WTC11 (cell line): ENCODE measurements at regions of chr20 and their contacts with region 1.

Region 1: DNA sequence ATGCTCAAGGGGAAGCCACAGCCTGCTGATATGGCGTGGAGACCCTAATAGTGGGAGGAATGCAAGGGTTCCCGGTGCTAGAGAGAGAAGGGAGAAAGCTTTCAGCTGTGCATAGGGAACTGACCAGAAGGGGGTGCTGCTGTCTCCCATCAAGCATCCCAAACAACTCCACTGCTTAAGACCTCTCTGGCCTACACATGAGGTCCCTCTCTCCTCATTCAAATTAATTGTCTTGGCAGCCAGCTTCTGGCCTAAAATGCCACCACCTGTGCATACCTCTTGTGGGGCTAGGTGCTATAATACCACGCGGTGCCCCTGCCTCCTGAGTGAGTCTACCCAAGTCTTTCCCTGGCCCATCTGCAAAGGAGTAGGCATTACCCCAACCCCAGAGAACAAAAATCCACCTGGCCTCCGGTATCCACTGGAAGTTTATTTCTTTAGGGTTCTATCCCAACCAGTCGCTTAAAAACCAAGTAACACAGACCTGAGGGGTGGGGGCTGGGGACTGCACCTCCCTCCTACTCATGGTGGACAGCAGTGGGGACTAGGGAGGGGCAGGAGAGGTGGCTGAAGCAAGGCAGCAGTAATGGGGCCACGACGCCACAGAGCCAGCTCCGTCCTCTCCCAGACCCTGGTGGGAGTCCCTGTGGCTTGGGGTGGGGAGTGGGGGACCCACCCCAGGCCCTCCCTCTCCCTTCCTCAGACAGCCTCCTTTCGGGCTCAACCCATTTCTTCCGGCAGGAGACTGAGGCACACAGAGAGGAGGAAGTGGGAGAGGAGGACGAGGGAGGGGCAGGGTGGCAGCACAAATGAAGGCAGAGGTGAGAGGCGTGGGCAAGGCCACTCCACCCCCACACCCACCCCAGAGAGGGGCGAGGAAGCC is 14.2 kb downstream of the ADISSP start:
- DNase-seq: peak; percentile 78
- ATAC-seq: peak; percentile 59
- H3K4me3 Mint-ChIP-seq: no peak overlapping the region
- H3K27ac Mint-ChIP-seq: no peak overlapping the region
- H3K4me1 Mint-ChIP-seq: peaks cover 6% of the 10 kb centered on the region
- H3K27me3 Mint-ChIP-seq: peaks cover 25% of the 10 kb centered on the region
- CTCF ChIP-seq: peak; percentile 57; the same call in 1 of the 2 replicates

Region 2: GRCh38 chr20:3563548-3564177 is 189.7 kb before region 1 on chr20:
- CTCF ChIA-PET with region 1: interaction called, 18 read pairs
- POLR2A ChIA-PET with region 1: no interaction called
- DNase-seq: no peak
- ATAC-seq: peak; percentile 50; the same call in 1 of the 2 replicates
- H3K4me3 Mint-ChIP-seq: no peak overlapping the region
- H3K27ac Mint-ChIP-seq: no peak overlapping the region
- H3K4me1 Mint-ChIP-seq: peaks cover 10% of the 10 kb centered on the region
- H3K27me3 Mint-ChIP-seq: no peaks in the 10 kb centered on the region
- CTCF ChIP-seq: 0 out of 2 replicates have a peak, but pooled peaks have one; percentile 25

Region 3: DNA sequence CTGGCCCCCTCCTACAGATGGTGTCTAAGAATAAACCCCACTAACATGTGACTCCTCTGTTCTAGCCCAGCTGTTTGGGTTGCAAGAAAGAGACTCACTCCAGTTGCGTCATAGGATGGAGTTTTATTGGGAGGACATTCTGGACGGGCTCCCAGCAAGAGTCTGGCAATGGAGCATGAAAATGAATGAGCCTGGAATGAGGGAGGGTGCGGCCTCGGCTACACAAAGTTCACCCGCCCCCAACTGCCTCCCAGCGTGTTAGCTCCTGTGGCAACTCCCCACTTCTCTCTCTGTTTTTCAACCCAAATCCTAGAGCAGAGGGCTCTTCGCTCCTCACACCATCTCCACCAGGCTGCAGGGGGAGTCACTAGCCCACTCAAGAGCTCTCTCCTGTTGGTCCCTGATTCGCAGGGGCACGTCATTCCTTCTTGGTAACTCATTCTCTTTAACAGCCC is 66.4 kb before region 1 on chr20:
- CTCF ChIA-PET with region 1: interaction called, 21 read pairs
- POLR2A ChIA-PET with region 1: interaction called, 3 read pairs
- DNase-seq: no peak
- ATAC-seq: peak; percentile 17
- H3K4me3 Mint-ChIP-seq: no peak overlapping the region
- H3K27ac Mint-ChIP-seq: no peak overlapping the region
- H3K4me1 Mint-ChIP-seq: peaks cover 30% of the 10 kb centered on the region
- H3K27me3 Mint-ChIP-seq: peaks cover 15% of the 10 kb centered on the region
- CTCF ChIP-seq: no peak

Region 4: GRCh38 chr20:3716195-3716834 is 37.0 kb before region 1 on chr20:
- CTCF ChIA-PET with region 1: interaction called, 88 read pairs
- POLR2A ChIA-PET with region 1: no interaction called
- DNase-seq: peak; percentile 70
- ATAC-seq: peak; percentile 98
- H3K4me3 Mint-ChIP-seq: no peak overlapping the region
- H3K27ac Mint-ChIP-seq: 0 out of 2 replicates have a peak overlapping the region, but pooled peaks have one; percentile 8
- H3K4me1 Mint-ChIP-seq: peaks cover 8% of the 10 kb centered on the region
- H3K27me3 Mint-ChIP-seq: no peaks in the 10 kb centered on the region
- CTCF ChIP-seq: peak; percentile 41; the same call in 1 of the 2 replicates

Region 5: GRCh38 chr20:3739054-3739925 is 14.0 kb before region 1 on chr20:
- CTCF ChIA-PET with region 1: interaction called, 47 read pairs
- POLR2A ChIA-PET with region 1: interaction called, 3 read pairs
- DNase-seq: no peak
- ATAC-seq: peak; percentile 35
- H3K4me3 Mint-ChIP-seq: no peak overlapping the region
- H3K27ac Mint-ChIP-seq: peak overlapping the region; percentile 68
- H3K4me1 Mint-ChIP-seq: peaks cover 24% of the 10 kb centered on the region
- H3K27me3 Mint-ChIP-seq: peaks cover 2% of the 10 kb centered on the region
- CTCF ChIP-seq: no peak

Region 6: GRCh38 chr20:3786665-3787323 is 33.5 kb after region 1 on chr20 and contains the start of gene CENPB:
- CTCF ChIA-PET with region 1: interaction called, 15 read pairs
- POLR2A ChIA-PET with region 1: no interaction called
- DNase-seq: peak; percentile 89
- ATAC-seq: peak; percentile 81
- H3K4me3 Mint-ChIP-seq: peak within 1 kb of the TSS; percentile 83
- H3K27ac Mint-ChIP-seq: no peak within 1 kb of the TSS
- H3K4me1 Mint-ChIP-seq: peaks cover 20% of the 10 kb centered on the region
- H3K27me3 Mint-ChIP-seq: peaks cover 24% of the 10 kb centered on the region
- CTCF ChIP-seq: peak; percentile 65; the same call in 1 of the 2 replicates
- total RNA-seq, gene CENPB: 55.3 to 58.7 TPM (median 57.6 TPM) in 3 replicates

Region 7: GRCh38 chr20:3828798-3829197 is 75.5 kb after region 1 on chr20:
- CTCF ChIA-PET with region 1: no interaction called
- POLR2A ChIA-PET with region 1: no interaction called
- DNase-seq: no peak
- ATAC-seq: no peak
- H3K4me3 Mint-ChIP-seq: no peak overlapping the region
- H3K27ac Mint-ChIP-seq: no peak overlapping the region
- H3K4me1 Mint-ChIP-seq: no peaks in the 10 kb centered on the region
- H3K27me3 Mint-ChIP-seq: no peaks in the 10 kb centered on the region
- CTCF ChIP-seq: no peak